Left lung (tissue), 14 donors: ENCODE measurements at regions of chr9 and their contacts with region 1.

Region 1: DNA sequence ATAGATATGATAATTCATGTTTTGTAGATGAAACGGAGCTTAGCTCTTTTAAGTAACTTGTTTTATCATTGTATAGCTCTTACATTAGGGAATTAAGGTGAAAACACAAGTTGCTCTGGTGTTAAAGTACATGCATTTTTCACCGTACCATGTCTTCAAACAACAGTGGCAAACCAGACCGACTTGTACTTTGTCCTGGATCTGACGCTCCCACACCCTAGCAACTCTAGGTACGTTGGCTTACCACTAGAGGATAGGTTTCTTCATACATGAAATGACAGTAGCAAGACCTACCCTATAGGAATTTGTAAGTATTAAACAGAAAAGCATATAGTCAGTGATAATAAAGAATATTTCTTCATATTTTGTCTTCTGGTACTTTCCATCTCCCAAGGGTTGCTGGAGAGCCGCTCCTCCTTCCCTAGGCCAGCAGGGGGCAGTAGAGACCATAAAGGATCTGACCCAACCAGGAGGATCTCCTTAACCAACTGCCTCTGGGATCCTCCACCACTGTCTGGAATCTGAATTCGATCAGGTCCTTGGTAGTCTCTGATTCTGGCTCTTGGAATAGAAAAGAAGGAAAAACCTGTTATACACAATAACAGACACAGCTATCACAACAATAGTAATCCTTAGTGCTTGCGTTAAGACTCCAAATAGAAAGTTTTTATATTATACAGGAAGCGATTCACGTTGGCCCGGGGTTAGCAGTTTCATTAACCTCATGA is 136.7 kb downstream of the CAVIN4 start:
- DNase-seq: peak in 3 of 4 donors; percentile 26 to 64 (median 39)
- ATAC-seq: peak; percentile 96
- H3K4me3 ChIP-seq: no peak overlapping the region
- H3K27ac ChIP-seq: no peak overlapping the region
- H3K4me1 ChIP-seq: no peaks in the 10 kb centered on the region
- H3K27me3 ChIP-seq: peaks cover 0 to 7% of the 10 kb centered on the region in 2 donors
- CTCF ChIP-seq: peak; percentile 76 to 78

Region 2: DNA sequence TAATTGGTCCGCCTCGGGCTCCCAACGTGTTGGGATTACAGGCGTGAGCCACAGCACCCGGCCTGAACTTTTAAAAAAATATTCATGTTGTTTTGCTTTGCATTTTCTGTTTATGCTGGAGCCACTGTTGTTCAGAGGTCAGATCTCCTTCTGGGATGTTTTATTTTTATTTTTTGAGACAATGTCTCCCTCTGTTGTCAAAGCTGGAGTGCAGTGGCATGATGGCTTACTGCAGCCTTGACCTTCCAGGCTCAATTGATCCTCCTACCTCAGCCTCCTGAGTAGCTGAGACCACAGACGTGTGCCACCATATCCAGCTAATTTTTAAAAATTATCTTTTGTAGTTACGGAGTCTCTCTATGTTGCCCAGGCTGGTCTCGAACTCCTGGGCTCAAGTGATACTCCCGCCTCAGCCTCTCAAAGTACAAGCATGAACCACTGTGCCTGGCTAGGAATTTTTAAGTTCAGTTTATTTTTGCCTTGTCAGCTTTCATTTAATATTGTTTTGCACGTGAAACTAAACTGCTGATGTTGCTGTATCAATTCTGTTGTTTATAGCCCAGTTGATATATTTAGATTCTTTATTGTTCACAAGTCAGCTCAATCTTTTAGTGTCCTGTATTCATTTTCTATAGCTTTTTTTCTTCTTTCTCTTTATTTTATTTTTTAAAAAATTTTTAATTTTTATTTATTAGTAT is 227.9 kb before region 1 on chr9:
- intact Hi-C with region 1: no loop called
- DNase-seq: no peak
- ATAC-seq: no peak
- H3K4me3 ChIP-seq: no peak overlapping the region
- H3K27ac ChIP-seq: no peak overlapping the region
- H3K4me1 ChIP-seq: no peaks in the 10 kb centered on the region
- H3K27me3 ChIP-seq: no peaks in the 10 kb centered on the region
- CTCF ChIP-seq: no peak

Region 3: DNA sequence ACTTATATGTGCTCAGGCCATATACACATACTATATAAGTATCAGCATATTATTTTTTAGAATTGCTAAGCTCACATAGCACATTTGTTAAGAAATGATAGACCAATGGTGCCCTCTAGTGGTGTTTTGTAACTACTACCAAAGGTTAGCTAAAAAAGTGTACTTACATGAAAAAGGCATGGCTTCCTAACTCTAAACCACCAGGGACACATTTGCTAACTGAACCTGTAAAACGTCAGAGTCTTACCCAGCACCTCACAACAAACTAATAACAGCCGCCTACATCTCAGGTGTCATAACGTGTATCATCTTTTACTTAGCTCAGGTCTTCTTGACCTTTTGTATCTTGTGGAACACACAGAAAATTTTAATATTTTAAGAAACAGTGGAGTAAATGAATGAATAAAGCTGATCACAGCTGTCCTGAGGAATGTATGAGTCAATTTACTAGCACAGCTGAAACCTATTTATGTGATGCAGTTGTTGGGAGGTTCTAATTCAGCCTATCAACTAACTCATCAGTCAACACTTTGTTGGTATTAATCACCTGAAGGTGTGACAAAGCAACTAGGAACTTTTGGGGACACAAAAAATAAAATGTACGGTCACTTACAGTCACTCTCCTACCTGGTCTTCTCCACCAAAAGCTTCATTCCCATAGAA is 597.4 kb after region 1 on chr9:
- intact Hi-C with region 1: loop called in 1 of 2 experiments (anchors 5 kb)
- DNase-seq: peak in 2 of 4 donors; percentile 66 to 83
- ATAC-seq: peak; percentile 88
- H3K4me3 ChIP-seq: no peak overlapping the region
- H3K27ac ChIP-seq: no peak overlapping the region
- H3K4me1 ChIP-seq: no peaks in the 10 kb centered on the region
- H3K27me3 ChIP-seq: no peaks in the 10 kb centered on the region
- CTCF ChIP-seq: peak; percentile 62 to 69

Region 4: GRCh38 chr9:101398068-101398929 is 683.8 kb after region 1 on chr9 and contains the starts of genes MRPL50 and ZNF189:
- intact Hi-C with region 1: no loop called
- DNase-seq: peak; percentile 98 to 99 (median 99)
- ATAC-seq: peak; percentile 98
- H3K4me3 ChIP-seq: peak within 1 kb of the TSS; percentile 71 to 85
- H3K27ac ChIP-seq: peak within 1 kb of the TSS; percentile 83 to 88
- H3K4me1 ChIP-seq: peaks cover 21 to 57% of the 10 kb centered on the region in 2 donors
- H3K27me3 ChIP-seq: no peaks in the 10 kb centered on the region
- CTCF ChIP-seq: no peak
- polyA plus RNA-seq, gene MRPL50: 20.3 to 24.6 (median 22.2) TPM
- polyA plus RNA-seq, gene ZNF189: 37.1 to 45.1 (median 40.0) TPM